Right ventricle myocardium superior (tissue), 1 donor: ENCODE measurements at regions of chr2 and their contacts with region 1.

Region 1: DNA sequence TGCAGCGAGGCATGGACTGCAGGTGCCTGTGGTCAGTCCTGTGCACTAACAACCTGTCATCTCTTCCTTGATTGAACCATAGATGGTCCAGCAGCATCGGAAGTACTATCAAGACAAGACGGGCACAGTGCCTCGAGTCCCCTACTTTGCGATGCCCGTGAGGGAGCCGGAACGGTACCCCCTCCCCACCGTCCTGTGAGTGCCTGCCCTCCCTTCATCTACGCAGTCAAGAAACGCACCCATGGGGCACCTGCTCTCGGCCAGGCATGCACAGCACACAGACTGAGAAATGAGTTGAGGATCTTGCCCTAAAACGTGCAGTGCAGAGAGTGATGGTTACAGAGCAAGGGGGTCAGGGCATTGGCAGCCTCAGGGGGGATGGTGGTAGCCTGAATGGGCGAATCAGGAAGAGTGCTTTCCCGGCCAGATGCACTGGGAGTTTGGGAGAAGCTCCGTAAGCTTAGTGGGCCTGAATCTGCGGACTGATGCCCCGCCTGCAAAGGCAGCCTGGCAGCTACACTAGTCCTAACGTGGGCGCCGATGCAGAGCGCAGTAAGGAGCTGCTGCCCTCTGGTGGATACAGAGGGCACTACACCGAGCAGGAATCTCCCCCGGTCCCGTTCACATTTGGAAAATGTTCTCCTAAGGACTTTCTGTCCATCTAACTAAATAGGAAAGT is 63.6 kb downstream of the CIB4 start:
- DNase-seq: peak; percentile 69
- ATAC-seq: peak; percentile 81

Region 2: GRCh38 chr2:26503231-26503880 is 74.2 kb before region 1 on chr2:
- intact Hi-C with region 1: loop called (anchors 10 kb)
- DNase-seq: peak; percentile 81
- ATAC-seq: peak; percentile 98